H1 (cell line): ENCODE measurements at regions of chr20 and their contacts with region 1.

Region 1: GRCh38 chr20:621125-621756 is 11.1 kb upstream of the TCF15 start:
- DNase-seq: no peak
- H3K4me3 ChIP-seq: no peak overlapping the region
- H3K27ac ChIP-seq: no peak overlapping the region
- H3K4me1 ChIP-seq: 0 out of 7 replicates have a peak, but pooled peaks cover 0 to 5% (median 2%) of the 10 kb centered on the region in 4 experiments
- H3K27me3 ChIP-seq: no peaks in the 10 kb centered on the region
- CTCF ChIP-seq: no peak
- EP300 ChIP-seq: no peak
- POLR2A ChIP-seq: no peak
- RAD21 ChIP-seq: no peak

Region 2: DNA sequence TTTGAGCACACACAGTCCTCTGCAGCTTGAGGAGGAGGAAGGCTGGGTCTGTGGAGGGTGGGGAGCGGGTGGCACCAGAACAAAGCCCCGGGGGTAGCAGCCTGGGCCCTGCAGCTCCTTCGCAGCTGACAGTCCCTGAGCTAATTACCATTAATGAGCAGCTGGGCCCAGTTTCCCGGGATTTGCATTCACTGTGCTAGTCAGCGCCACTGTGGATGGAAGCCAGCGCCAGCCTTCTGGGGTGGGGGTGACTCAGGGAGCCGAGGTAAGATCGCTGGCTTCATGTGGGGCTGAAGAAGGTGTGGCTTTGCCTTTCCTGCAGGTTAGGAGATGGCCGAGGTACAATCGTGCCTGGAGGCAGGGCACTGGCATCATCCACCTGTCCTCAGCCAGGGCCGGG is 13.3 kb after region 1 on chr20:
- CTCF ChIA-PET with region 1: interaction called, 10 read pairs
- POLR2A ChIA-PET with region 1: no interaction called
- DNase-seq: no peak
- H3K4me3 ChIP-seq: no peak overlapping the region
- H3K27ac ChIP-seq: no peak overlapping the region
- H3K4me1 ChIP-seq: peaks cover 0 to 2% (median 0%) of the 10 kb centered on the region in 4 experiments; a peak in 1 of 7 replicates
- H3K27me3 ChIP-seq: no peaks in the 10 kb centered on the region; a peak in 1 of 7 replicates
- CTCF ChIP-seq: no peak
- EP300 ChIP-seq: no peak
- POLR2A ChIP-seq: no peak
- RAD21 ChIP-seq: no peak

Region 3: DNA sequence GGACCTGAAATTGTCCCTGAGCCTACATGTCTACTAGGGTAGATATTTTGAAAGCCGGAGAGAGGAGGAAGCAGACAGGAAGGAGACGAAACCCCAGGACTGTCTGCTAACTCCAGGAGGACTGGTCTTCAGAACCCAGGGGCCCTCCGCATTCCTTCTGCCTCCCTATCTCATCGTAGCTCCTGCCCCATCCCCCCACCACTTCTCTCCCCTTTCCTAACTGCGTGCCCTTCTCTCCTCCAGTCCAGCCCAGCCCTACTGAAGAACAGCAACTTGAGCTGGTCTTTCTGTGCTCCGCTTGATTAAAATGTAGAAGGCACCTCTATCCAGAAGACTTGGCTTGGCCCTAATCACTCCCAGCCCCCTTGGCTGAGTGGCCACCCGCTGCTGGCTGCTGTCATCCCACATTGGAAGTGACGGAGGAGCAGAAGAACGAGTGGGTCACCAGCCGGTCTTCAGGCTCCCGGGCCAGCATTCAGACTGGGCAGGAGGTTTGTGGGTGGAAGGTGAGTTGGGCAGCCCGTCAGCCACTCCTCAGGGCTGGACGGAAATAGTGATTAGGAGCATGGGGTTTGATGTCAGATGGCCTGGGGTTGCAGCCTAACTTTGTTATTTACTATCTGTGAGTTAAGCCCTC is 323.7 kb after region 1 on chr20:
- CTCF ChIA-PET with region 1: no interaction called
- POLR2A ChIA-PET with region 1: no interaction called
- DNase-seq: no peak
- H3K4me3 ChIP-seq: peak overlapping the region in 2 of 4 experiments; percentile 14 to 43; a peak in 2 of 8 replicates
- H3K27ac ChIP-seq: no peak overlapping the region
- H3K4me1 ChIP-seq: peaks cover 0 to 14% (median 8%) of the 10 kb centered on the region in 4 experiments; a peak in 5 of 7 replicates
- H3K27me3 ChIP-seq: no peaks in the 10 kb centered on the region
- CTCF ChIP-seq: no peak
- EP300 ChIP-seq: no peak
- POLR2A ChIP-seq: no peak
- RAD21 ChIP-seq: no peak

Region 4: DNA sequence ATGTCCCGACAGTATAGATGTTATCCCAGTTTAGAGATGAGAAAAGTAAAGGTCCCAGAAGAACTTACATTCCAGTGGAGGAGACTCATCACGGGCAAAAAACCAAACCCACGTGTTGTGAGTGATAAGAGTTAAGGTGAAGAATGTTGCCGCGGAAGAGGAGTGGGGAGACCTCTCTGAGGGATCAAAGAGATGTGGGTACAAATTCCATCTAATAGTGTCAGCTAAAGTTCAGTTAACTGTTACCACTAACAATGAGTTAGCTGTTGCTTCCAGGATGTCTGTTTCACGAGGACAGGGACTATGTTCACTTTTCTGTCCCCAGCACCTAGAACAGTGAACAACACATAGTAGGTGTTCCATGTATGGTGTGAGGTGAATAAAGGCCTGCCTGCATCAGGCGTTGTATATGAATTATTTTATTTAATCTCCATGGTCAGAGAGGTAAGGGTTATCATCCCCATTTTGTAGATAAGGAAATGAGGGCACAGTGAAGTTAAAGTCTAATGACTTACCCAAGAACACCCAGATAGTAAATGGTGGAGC is 420.7 kb after region 1 on chr20:
- CTCF ChIA-PET with region 1: no interaction called
- POLR2A ChIA-PET with region 1: no interaction called
- DNase-seq: no peak
- H3K4me3 ChIP-seq: no peak overlapping the region
- H3K27ac ChIP-seq: no peak overlapping the region
- H3K4me1 ChIP-seq: no peaks in the 10 kb centered on the region
- H3K27me3 ChIP-seq: no peaks in the 10 kb centered on the region; a peak in 1 of 7 replicates
- CTCF ChIP-seq: no peak
- EP300 ChIP-seq: no peak
- POLR2A ChIP-seq: no peak
- RAD21 ChIP-seq: no peak